ENCODE measurements at regions of chr1 and their contacts with region 1.

Region 1: DNA sequence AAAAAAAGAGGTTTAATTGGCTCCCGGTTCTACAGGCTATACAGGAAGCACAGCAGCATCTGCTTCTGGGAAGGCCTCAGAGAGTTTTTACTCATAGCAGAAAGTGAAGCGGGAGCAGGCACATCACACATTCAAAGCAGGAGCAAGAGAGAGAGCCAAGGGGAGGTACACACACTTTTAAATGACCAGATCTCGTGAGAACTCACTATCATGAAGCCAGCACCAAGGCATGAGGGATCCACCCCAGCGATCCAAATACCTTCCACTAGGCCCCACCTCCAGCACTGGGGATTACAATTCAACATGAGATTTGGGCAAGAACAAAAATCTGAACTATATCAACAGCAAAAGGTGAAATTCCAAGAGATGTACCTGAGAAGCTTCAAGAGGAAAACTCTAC is 20.8 kb upstream of the FAM76A start:
- DNase-seq: no peak
- ATAC-seq: no peak
- H3K4me3 ChIP-seq: no peak overlapping the region
- H3K4me3 Mint-ChIP-seq: no peak overlapping the region
- H3K27ac ChIP-seq: no peak overlapping the region
- H3K27ac Mint-ChIP-seq: no peak overlapping the region
- H3K4me1 ChIP-seq: no peaks in the 10 kb centered on the region
- H3K4me1 Mint-ChIP-seq: no peaks in the 10 kb centered on the region
- H3K27me3 ChIP-seq: no peaks in the 10 kb centered on the region
- H3K27me3 Mint-ChIP-seq: no peaks in the 10 kb centered on the region
- CTCF ChIP-seq: no peak

Region 2: GRCh38 chr1:27678747-27679146 is 26.2 kb before region 1 on chr1:
- CTCF ChIA-PET with region 1: no interaction called
- POLR2A ChIA-PET with region 1: no interaction called
- intact Hi-C with region 1: loop called in 1 of 2 experiments (anchors 1 kb)
- DNase-seq: no peak
- ATAC-seq: no peak
- H3K4me3 ChIP-seq: no peak overlapping the region
- H3K4me3 Mint-ChIP-seq: no peak overlapping the region
- H3K27ac ChIP-seq: no peak overlapping the region
- H3K27ac Mint-ChIP-seq: no peak overlapping the region
- H3K4me1 ChIP-seq: no peaks in the 10 kb centered on the region
- H3K4me1 Mint-ChIP-seq: no peaks in the 10 kb centered on the region
- H3K27me3 ChIP-seq: no peaks in the 10 kb centered on the region
- H3K27me3 Mint-ChIP-seq: no peaks in the 10 kb centered on the region
- CTCF ChIP-seq: no peak

Region 3: DNA sequence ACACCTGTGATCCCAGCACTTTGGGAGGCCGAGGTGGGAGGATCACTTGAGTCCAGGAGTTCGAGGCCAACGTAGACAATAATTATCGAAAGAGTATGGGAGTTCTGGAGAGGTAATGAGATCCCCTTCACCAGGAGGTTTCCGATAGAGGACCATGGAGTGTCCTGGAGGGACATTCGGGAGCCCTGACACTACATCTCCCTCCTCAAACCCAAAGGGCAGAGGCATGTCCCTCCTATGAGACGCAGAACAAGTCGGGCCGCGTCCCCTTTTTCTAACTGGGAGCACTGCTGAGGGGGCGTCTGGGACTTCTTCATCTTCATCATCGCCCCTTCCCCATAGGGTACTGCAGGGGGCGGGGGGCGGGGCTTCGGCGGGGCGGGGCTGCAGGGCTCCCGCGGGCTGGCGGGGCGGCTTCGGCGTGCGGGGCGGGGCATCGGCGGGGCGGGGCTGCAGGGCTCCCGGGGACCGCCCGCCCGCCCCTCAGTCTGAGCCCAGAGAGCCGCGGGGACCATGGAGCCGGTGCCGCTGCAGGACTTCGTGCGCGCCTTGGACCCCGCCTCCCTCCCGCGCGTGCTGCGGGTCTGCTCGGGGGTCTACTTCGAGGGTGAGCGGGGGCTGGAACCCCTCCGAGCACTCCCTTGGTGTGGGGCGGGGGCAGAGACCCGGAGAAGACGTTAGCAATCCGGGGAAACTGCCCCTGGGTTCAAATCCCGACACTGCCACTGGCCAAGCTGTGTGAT is 167.3 kb after region 1 on chr1 and contains the start of gene THEMIS2:
- CTCF ChIA-PET with region 1: no interaction called
- POLR2A ChIA-PET with region 1: no interaction called
- intact Hi-C with region 1: no loop called
- DNase-seq: peak; percentile 58 to 86 (median 81)
- ATAC-seq: peak; percentile 83
- H3K4me3 ChIP-seq: peak within 1 kb of the TSS; percentile 83 to 100
- H3K4me3 Mint-ChIP-seq: peak within 1 kb of the TSS; percentile 98
- H3K27ac ChIP-seq: peak within 1 kb of the TSS; percentile 47 to 61
- H3K27ac Mint-ChIP-seq: peak within 1 kb of the TSS; percentile 89
- H3K4me1 ChIP-seq: peaks cover 46% of the 10 kb centered on the region
- H3K4me1 Mint-ChIP-seq: peaks cover 49% of the 10 kb centered on the region
- H3K27me3 ChIP-seq: no peaks in the 10 kb centered on the region
- H3K27me3 Mint-ChIP-seq: no peaks in the 10 kb centered on the region
- CTCF ChIP-seq: no peak
- total RNA-seq, gene THEMIS2: 13.4 to 15.2 TPM